Breast epithelium (tissue), 4 donors: ENCODE measurements at regions of chr2 and their contacts with region 1.

Region 1: DNA sequence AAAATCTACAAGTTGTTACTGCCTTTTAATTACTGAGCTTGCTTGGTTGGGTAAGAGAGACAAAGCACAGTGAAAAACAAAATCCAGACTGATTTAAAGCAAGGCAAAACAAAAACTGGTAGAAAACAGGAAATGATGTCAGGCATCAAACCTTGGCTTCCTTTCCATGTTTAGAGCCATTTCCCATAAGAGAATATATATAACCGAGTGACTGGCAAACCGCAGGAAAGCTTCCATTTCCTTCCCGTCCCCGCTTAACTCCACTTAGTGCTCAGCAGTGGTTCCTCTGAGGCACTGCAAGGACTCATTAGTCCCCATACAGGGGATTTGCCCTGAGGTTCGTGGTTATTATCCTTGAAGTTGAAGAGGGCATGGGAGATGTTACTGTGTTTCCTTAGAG is 446.3 kb downstream of the LPIN1 start:
- DNase-seq: no peak
- H3K4me3 ChIP-seq: no peak overlapping the region
- H3K27ac ChIP-seq: peak overlapping the region in 1 of 2 donors; percentile 70
- H3K4me1 ChIP-seq: no peaks in the 10 kb centered on the region
- H3K27me3 ChIP-seq: no peaks in the 10 kb centered on the region
- CTCF ChIP-seq: no peak
- POLR2A ChIP-seq: no peak

Region 2: DNA sequence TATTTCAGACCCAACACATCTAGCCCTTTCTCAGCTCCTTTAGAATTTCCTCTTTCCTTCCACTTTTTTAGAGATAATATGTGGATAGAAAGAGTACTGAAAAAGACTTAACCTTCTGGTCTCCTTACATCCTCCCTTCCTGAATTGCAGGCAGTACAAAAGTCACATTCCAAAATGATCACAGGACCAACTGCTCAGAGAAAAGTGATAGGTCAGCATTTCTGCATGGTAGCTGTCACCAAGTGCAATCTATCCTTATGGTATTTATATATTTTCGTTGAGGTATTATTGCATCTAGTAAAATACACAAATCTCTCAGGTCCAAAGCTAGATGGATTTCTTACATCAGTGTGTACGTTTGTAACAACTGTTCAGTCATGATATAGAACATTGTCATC is 18.8 kb before region 1 on chr2:
- intact Hi-C with region 1: loop called (anchors 1 kb)
- DNase-seq: no peak
- H3K4me3 ChIP-seq: no peak overlapping the region
- H3K27ac ChIP-seq: no peak overlapping the region
- H3K4me1 ChIP-seq: peaks cover 5 to 9% of the 10 kb centered on the region in 2 donors
- H3K27me3 ChIP-seq: no peaks in the 10 kb centered on the region
- CTCF ChIP-seq: no peak
- POLR2A ChIP-seq: no peak

Region 3: GRCh38 chr2:13711154-13711553 is 1518.4 kb after region 1 on chr2:
- intact Hi-C with region 1: no loop called
- DNase-seq: no peak
- H3K4me3 ChIP-seq: no peak overlapping the region
- H3K27ac ChIP-seq: no peak overlapping the region
- H3K4me1 ChIP-seq: no peaks in the 10 kb centered on the region
- H3K27me3 ChIP-seq: no peaks in the 10 kb centered on the region
- CTCF ChIP-seq: no peak
- POLR2A ChIP-seq: no peak